GM23248 (cell line): ENCODE measurements at regions of chr6 and their contacts with region 1.

Region 1: DNA sequence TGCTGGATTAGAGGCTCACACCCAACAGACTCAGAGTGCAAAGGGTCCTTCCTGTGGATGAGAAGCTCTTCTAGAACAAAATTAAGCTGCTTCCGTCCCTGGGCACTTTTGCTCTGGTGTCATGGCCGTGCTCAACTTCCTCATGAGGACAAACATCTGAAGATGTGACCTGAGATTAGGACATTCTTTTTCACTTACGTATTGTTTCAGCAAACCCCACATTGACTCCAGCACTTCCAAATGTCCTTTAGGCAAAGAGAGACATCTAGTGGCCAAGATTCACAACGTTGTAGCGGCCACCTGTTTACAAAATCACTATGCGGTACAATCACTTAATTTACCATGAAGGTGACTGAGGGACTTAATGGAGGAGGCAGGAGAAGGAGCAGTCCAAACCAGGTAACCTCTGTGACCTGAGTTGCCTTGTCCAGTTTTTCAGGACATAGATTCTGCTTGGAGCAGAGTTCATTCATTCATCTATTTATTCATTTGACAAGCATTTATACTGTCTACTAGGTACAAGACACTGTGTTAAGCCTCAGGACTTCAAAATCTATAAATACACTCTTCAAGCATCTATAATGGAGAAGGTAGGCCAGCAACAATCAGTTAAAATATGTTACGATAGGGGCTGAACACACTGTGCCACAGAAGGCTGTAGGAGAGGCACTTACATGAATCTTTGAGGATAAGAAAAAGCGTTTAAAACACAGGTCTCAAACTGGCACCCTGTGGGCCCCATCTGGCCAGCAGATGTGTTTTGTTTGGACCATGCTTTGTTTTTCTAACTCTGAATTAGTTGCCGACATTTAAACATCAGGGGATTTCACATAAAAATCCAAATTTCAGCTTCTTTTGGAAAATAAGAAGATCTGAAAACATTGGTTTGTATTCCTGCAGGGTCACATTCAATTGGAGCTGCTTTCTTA is 5.6 kb upstream of the ADGRF1 start:
- DNase-seq: peak; percentile 72
- H3K4me3 ChIP-seq: no peak overlapping the region
- H3K27ac ChIP-seq: no peak overlapping the region
- H3K4me1 ChIP-seq: no peaks in the 10 kb centered on the region
- H3K27me3 ChIP-seq: peaks cover 9% of the 10 kb centered on the region; the same call in 1 of the 2 replicates

Region 2: GRCh38 chr6:46850792-46851191 is 197.0 kb before region 1 on chr6:
- in situ Hi-C with region 1: loop called (anchors 10 kb)
- DNase-seq: no peak
- H3K4me3 ChIP-seq: no peak overlapping the region
- H3K27ac ChIP-seq: no peak overlapping the region
- H3K4me1 ChIP-seq: no peaks in the 10 kb centered on the region
- H3K27me3 ChIP-seq: no peaks in the 10 kb centered on the region; the same call in 1 of the 2 replicates